Uterus (tissue), 4 donors: ENCODE measurements at regions of chr13 and their contacts with region 1.

Region 1: GRCh38 chr13:43085545-43085944 is 62.2 kb downstream of the DNAJC15 start:
- DNase-seq: no peak
- H3K4me3 ChIP-seq: no peak overlapping the region
- H3K27ac ChIP-seq: no peak overlapping the region
- H3K4me1 ChIP-seq: no peaks in the 10 kb centered on the region
- H3K27me3 ChIP-seq: no peaks in the 10 kb centered on the region
- CTCF ChIP-seq: peak; percentile 54 to 75 (median 61)
- POLR2A ChIP-seq: no peak

Region 2: DNA sequence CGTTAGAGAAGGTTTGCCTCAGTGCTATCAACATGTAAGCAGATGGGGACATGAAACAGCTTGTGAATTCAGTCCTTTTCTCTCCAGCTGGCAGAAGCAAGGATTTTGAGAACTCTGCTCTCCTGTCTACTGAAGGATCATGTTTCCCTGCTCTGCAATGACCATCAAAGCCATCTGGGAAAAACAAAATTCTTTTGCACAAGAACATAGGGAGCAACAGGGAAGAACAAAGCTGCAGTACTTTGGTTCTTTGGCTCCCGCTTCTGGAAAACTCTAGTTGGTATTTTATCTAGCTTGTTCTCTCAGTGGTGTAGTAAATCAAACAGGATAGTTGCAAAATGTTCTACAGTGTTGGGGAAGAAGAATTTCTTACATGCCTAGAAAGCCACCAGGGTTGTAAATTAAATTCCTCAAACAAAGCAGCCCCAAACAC is 430.9 kb after region 1 on chr13:
- intact Hi-C with region 1: no loop called
- DNase-seq: peak; percentile 42 to 77
- H3K4me3 ChIP-seq: no peak overlapping the region
- H3K27ac ChIP-seq: peak overlapping the region; percentile 62 to 85
- H3K4me1 ChIP-seq: peaks cover 0 to 11% of the 10 kb centered on the region in 2 donors
- H3K27me3 ChIP-seq: no peaks in the 10 kb centered on the region
- CTCF ChIP-seq: peak in 1 of 4 experiments; percentile 14
- POLR2A ChIP-seq: no peak

Region 3: DNA sequence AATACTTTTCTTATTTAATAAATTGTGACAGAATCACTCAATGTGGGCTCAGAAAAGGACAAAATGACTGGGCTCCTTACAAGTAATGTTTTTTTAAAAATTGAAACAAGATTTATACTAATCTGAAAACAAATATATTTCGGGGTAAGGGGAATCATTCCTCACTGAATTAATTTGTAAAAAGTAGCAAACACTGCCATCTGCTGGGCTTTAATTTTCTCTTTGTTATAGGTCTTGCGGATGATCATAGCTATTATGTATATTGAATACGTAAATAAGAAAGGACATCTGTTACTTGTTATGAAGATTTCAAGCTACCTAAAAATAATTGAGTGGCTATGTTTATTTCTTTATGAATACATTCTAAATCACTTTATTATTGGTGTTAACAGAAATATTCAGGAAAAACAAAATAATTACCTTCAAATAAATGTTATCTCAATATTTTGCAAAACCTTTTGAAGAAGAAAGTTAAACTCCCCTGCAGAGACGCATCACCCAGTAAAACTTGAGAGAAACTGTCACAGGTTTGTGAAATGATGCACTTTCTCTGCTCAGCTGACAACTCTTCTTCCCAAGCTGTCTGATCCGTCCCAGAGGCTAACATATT is 719.0 kb after region 1 on chr13:
- intact Hi-C with region 1: loop called (anchors 10 kb)
- DNase-seq: no peak
- H3K4me3 ChIP-seq: no peak overlapping the region
- H3K27ac ChIP-seq: peak overlapping the region; percentile 10 to 12
- H3K4me1 ChIP-seq: no peaks in the 10 kb centered on the region
- H3K27me3 ChIP-seq: no peaks in the 10 kb centered on the region
- CTCF ChIP-seq: peak; percentile 42 to 75 (median 56)
- POLR2A ChIP-seq: no peak